Left ventricle myocardium superior (tissue), 1 donor: ENCODE measurements at regions of chr9 and their contacts with region 1.

Region 1: DNA sequence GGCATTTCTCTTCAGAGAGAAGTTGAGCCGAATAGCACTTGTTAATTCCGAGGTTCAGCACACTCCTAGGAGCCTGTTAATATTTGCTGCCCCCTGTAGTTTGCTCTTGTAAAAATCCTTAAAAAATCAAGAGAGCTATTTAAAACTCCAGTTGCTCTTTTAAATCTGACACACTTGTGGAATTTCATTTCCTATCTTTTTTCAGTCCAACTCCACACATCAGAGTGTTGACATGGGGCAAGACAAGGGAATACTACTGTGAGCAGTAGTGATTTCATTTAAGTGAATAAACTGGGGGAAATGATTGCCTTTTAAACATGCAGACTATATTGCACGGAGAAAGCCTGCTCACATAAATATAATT is 1096.3 kb upstream of the DMAC1 start:
- DNase-seq: no peak
- ATAC-seq: peak; percentile 84

Region 2: GRCh38 chr9:8486095-8486494 is 409.7 kb before region 1 on chr9:
- intact Hi-C with region 1: loop called (anchors 5 kb)
- DNase-seq: peak; percentile 31
- ATAC-seq: peak; percentile 84

Region 3: DNA sequence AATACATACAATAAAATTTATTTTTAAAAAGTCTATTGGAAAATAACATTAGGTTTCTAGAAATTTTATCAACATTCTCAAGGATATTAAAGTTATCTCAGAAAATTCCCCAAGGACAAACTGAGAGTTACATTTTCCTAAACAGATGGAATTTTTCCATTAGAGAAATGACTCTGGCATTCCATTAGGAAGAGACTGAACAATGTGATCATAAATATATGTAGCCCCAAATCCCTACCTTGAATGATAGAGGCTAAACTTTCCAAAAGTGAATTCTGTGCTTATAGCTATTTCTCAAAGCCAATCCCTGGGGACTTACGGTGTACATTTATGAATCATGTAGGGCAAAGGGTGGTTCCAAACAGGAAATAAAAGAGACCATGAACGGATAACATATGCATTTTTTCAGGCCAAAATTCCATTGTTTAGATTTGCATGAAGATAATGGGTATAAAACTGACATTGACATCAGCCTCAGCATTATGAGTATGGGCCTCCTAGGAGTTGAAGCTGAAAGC is 84.7 kb after region 1 on chr9:
- intact Hi-C with region 1: no loop called
- DNase-seq: no peak
- ATAC-seq: no peak

Region 4: GRCh38 chr9:9002826-9003583 is 107.2 kb after region 1 on chr9:
- intact Hi-C with region 1: loop called (anchors 10 kb)
- DNase-seq: no peak
- ATAC-seq: peak; percentile 87

Region 5: DNA sequence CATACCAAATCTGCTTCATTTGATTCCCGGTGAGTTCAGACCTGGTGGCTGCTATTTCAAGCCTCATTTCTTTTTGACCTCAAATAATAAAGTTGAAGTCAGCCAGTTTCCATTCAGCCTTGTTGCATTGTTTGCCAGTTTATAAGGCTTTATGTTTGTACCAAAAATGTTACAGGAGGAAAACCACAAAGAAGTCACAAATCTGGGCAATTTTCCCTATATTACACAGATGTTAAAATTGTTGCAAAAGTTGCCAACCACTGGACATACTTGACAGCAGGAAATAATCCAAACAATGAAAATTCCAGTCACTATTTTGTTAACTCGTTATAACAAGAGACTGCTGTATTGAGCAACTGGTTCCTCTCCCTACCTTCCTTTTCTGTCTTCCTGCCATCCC is 228.8 kb after region 1 on chr9:
- intact Hi-C with region 1: no loop called
- DNase-seq: no peak
- ATAC-seq: no peak